K562 (cell line): ENCODE measurements at regions of chr2 and their contacts with region 1.

Region 1: GRCh38 chr2:39728941-39729351 is 50.1 kb downstream of the THUMPD2 start:
- DNase-seq: peak; percentile 42 to 58 (median 48)
- ATAC-seq: peak; percentile 86
- H3K4me3 ChIP-seq: no peak overlapping the region
- H3K27ac ChIP-seq: no peak overlapping the region
- H3K4me1 ChIP-seq: no peaks in the 10 kb centered on the region
- H3K27me3 ChIP-seq: peaks cover 0 to 10% of the 10 kb centered on the region in 2 experiments; a peak in 1 of 5 replicates
- CTCF ChIP-seq: peak; percentile 72 to 81 (median 80)
- EP300 ChIP-seq: no peak
- POLR2A ChIP-seq: no peak
- RAD21 ChIP-seq: peak; percentile 30 to 63; a peak in 3 of 4 replicates

Region 2: DNA sequence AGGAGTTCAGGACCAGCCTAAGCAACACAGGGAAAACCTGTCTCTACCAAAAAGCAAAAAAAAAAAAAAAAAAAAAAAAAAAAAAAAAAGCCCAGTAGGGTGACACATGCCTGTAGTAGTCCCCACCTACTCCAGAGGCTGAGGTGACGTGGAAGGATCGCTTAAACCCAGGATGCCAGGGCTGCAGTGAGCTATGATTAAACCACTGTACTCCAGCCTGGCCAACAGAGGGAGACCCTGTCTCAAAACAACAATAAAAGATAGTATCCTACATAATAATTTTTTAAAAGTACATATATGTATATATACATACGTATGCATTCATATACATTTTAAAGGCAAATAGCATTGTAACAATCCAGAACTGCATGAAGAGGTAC is 659.8 kb before region 1 on chr2:
- CTCF ChIA-PET with region 1: no interaction called
- POLR2A ChIA-PET with region 1: no interaction called
- in situ Hi-C with region 1: no loop called
- intact Hi-C with region 1: loop called (anchors 10 kb)
- DNase-seq: no peak
- ATAC-seq: peak; percentile 59; the same call in 2 of the 3 replicates
- H3K4me3 ChIP-seq: no peak overlapping the region
- H3K27ac ChIP-seq: no peak overlapping the region
- H3K4me1 ChIP-seq: peaks cover 0 to 2% of the 10 kb centered on the region in 2 experiments; a peak in 1 of 5 replicates
- H3K27me3 ChIP-seq: no peaks in the 10 kb centered on the region
- CTCF ChIP-seq: peak in 1 of 3 experiments; percentile 6; a peak in 1 of 6 replicates
- EP300 ChIP-seq: no peak
- POLR2A ChIP-seq: no peak
- RAD21 ChIP-seq: no peak

Region 3: GRCh38 chr2:39234754-39235153 is 494.2 kb before region 1 on chr2:
- CTCF ChIA-PET with region 1: no interaction called
- POLR2A ChIA-PET with region 1: no interaction called
- in situ Hi-C with region 1: no loop called
- intact Hi-C with region 1: loop called (anchors 2 kb)
- DNase-seq: no peak
- ATAC-seq: no peak
- H3K4me3 ChIP-seq: no peak overlapping the region
- H3K27ac ChIP-seq: no peak overlapping the region
- H3K4me1 ChIP-seq: no peaks in the 10 kb centered on the region; a peak in 1 of 5 replicates
- H3K27me3 ChIP-seq: no peaks in the 10 kb centered on the region
- CTCF ChIP-seq: no peak
- EP300 ChIP-seq: no peak
- POLR2A ChIP-seq: no peak
- RAD21 ChIP-seq: no peak

Region 4: GRCh38 chr2:39379643-39380524 is 349.1 kb before region 1 on chr2:
- CTCF ChIA-PET with region 1: interaction called, 9 read pairs
- POLR2A ChIA-PET with region 1: no interaction called
- in situ Hi-C with region 1: no loop called
- intact Hi-C with region 1: loop called (anchors 1 kb)
- DNase-seq: peak; percentile 30 to 66 (median 36)
- ATAC-seq: peak; percentile 79
- H3K4me3 ChIP-seq: no peak overlapping the region
- H3K27ac ChIP-seq: peak overlapping the region; percentile 29; the same call in 1 of the 3 replicates
- H3K4me1 ChIP-seq: peaks cover 3 to 8% of the 10 kb centered on the region in 2 experiments
- H3K27me3 ChIP-seq: no peaks in the 10 kb centered on the region
- CTCF ChIP-seq: peak; percentile 41 to 69 (median 57); a peak in 5 of 6 replicates
- EP300 ChIP-seq: no peak
- POLR2A ChIP-seq: no peak
- RAD21 ChIP-seq: peak; percentile 74 to 86

Region 5: DNA sequence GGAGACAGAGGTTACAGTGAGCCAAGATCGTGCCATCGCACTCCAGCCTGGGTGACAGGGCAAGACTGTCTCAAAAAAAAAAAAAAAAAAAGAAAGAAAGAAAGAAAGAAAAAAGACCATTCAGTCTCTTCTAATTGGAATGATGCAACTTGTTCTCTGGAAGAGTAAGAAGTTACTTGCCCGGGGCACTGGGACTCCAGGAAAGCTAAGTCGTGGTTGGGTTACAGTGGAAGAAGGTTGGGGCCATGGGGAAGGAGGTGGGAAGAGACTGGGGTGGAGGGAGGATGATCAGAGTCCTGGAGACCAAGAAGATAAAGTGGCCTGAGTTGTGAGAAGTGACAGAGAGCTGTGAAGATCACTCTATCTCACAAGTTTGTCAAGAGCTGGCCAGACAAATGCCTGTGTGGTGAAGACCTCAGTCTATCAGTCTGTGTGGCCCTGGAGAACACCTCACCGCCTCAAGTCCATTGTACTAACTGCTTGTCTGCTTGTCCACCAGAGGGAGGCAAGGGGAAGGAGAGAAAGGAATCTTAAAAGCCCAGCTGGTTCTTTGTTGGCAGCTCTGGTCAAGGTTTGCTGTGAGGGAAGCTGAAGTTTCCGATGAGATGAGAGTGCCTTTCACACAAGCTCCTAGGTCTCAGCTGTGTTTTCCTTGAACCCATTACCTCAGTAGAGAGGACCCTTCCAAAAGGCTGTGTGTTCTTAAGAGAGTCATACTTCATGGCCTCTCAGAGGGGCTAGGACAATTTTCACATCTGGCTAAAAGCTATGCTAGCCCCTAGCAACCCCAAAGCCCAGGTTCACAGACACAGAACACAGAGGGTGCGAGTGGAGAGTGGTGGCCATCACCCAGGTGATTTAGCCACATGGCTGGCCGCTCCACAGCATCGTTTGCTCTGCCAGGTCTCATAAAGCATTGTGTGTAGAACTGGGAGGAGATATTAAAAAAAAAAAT is 135.2 kb before region 1 on chr2:
- CTCF ChIA-PET with region 1: no interaction called
- POLR2A ChIA-PET with region 1: no interaction called
- in situ Hi-C with region 1: no loop called
- intact Hi-C with region 1: loop called (anchors 2 kb)
- DNase-seq: peak in 2 of 4 experiments; percentile 37 to 61
- ATAC-seq: peak; percentile 97
- H3K4me3 ChIP-seq: no peak overlapping the region
- H3K27ac ChIP-seq: no peak overlapping the region
- H3K4me1 ChIP-seq: no peaks in the 10 kb centered on the region
- H3K27me3 ChIP-seq: peaks cover 4 to 6% of the 10 kb centered on the region in 2 experiments; a peak in 4 of 5 replicates
- CTCF ChIP-seq: peak; percentile 57 to 67 (median 59)
- EP300 ChIP-seq: no peak
- POLR2A ChIP-seq: no peak
- RAD21 ChIP-seq: peak; percentile 46 to 70

Region 6: DNA sequence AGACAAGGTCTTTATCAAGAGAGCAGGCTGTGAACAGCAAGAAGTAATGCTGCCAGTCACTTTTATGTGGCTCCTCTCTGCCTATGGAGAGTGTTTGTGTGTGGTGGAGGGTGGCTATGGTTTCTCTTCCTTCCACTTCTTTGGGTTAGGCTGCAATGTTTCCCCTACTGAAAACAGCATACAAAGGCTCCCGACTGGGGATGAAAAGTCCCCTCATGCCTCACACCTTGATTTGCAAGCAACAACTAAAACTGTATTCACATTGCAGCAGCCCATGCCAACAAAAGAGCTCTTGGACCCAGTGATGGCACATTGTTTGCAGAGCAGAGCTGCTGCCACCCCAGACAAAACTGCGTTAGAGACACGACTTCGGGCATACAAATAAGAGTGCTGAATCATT is 421.3 kb after region 1 on chr2:
- CTCF ChIA-PET with region 1: no interaction called
- POLR2A ChIA-PET with region 1: no interaction called
- in situ Hi-C with region 1: no loop called
- intact Hi-C with region 1: no loop called
- DNase-seq: no peak
- ATAC-seq: no peak
- H3K4me3 ChIP-seq: no peak overlapping the region
- H3K27ac ChIP-seq: no peak overlapping the region
- H3K4me1 ChIP-seq: no peaks in the 10 kb centered on the region
- H3K27me3 ChIP-seq: no peaks in the 10 kb centered on the region
- CTCF ChIP-seq: no peak
- EP300 ChIP-seq: no peak
- POLR2A ChIP-seq: no peak
- RAD21 ChIP-seq: no peak